ENCODE measurements at regions of chr9 and their contacts with region 1.

Region 1: DNA sequence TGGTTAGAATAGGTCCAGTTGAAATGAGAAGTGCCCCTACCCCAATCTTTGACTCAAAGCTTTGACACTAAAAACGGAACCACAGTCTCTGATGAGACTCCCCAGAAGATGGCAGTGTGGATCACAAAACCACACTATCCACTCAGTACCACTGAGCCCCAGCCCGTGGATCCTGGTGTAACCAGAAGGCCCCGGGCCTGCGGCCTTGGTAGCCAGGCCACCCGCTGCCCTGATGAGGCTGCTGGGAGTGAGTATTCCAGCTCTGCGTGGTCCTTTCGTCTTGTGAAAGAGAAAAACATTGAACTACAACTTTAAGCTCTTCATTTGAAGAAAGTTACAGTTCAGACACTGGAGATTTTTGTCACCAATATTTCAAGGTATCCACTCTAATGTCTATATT is 42.2 kb upstream of the FBP1 start:
- DNase-seq: no peak
- H3K4me3 ChIP-seq: no peak overlapping the region
- H3K27me3 ChIP-seq: no peaks in the 10 kb centered on the region
- CTCF ChIP-seq: peak; percentile 80

Region 2: GRCh38 chr9:94668418-94668932 is 13.0 kb before region 1 on chr9:
- CTCF ChIA-PET with region 1: interaction called, 16 read pairs
- POLR2A ChIA-PET with region 1: no interaction called
- DNase-seq: no peak
- H3K4me3 ChIP-seq: no peak overlapping the region
- H3K27me3 ChIP-seq: no peaks in the 10 kb centered on the region
- CTCF ChIP-seq: no peak

Region 3: GRCh38 chr9:94697972-94698581 is 16.6 kb after region 1 on chr9:
- CTCF ChIA-PET with region 1: interaction called, 20 read pairs
- POLR2A ChIA-PET with region 1: no interaction called
- DNase-seq: no peak
- H3K4me3 ChIP-seq: no peak overlapping the region
- H3K27me3 ChIP-seq: no peaks in the 10 kb centered on the region
- CTCF ChIP-seq: no peak

Region 4: DNA sequence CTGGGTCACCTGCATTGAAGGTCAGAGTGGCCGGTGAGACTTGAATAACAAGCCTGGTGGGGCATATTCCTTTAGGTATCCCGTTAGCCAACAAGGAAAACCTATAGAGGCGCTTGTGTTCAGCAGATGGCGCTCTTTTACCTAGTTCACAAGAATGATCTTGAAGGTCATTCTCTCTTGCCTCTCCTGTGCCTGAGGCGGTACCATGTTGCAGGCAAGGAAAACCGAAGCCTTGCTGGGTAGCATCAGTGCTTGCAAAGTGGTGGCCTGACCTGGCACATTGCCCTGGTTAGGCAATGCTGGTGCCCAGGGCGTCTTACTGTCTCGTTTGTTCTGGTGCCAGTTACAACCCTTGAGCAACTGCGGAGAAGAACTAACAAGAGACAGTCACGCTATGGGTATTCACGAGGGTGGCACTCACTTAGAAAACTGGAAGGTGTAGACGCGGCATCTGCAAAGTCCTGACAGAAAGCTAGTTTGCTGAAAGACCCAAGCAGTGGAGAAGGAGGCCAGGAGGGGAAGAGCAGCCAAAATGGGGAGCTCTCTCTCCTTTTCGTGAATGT is 101.7 kb after region 1 on chr9:
- CTCF ChIA-PET with region 1: interaction called, 14 read pairs
- POLR2A ChIA-PET with region 1: no interaction called
- DNase-seq: peak; percentile 58
- H3K4me3 ChIP-seq: no peak overlapping the region
- H3K27me3 ChIP-seq: no peaks in the 10 kb centered on the region
- CTCF ChIP-seq: peak; percentile 67

Region 5: DNA sequence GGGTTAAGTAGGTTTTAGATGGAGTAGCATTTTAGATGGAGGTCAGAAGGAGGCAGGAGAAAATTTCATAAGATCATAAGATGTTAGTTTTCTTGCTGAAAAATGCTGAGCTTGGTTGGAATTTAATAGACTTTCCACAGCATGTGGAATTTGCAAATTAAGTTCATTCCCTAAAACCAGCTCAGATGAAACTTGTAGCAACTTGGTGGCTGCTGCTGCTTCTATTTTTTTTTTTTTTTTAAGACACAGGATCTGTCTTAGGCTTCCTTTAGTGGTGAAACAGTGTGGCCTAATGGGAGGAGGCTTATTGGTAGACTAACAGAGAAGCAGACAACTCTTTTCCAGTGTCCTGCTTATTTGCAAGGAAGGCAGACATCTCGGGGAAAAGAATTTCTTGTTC is 199.5 kb after region 1 on chr9:
- CTCF ChIA-PET with region 1: interaction called, 12 read pairs
- POLR2A ChIA-PET with region 1: no interaction called
- DNase-seq: peak; percentile 54
- H3K4me3 ChIP-seq: no peak overlapping the region
- H3K27me3 ChIP-seq: no peaks in the 10 kb centered on the region
- CTCF ChIP-seq: no peak

Region 6: GRCh38 chr9:94928691-94929372 is 247.3 kb after region 1 on chr9:
- CTCF ChIA-PET with region 1: no interaction called
- POLR2A ChIA-PET with region 1: no interaction called
- DNase-seq: no peak
- H3K4me3 ChIP-seq: no peak overlapping the region
- H3K27me3 ChIP-seq: no peaks in the 10 kb centered on the region
- CTCF ChIP-seq: no peak

Region 7: DNA sequence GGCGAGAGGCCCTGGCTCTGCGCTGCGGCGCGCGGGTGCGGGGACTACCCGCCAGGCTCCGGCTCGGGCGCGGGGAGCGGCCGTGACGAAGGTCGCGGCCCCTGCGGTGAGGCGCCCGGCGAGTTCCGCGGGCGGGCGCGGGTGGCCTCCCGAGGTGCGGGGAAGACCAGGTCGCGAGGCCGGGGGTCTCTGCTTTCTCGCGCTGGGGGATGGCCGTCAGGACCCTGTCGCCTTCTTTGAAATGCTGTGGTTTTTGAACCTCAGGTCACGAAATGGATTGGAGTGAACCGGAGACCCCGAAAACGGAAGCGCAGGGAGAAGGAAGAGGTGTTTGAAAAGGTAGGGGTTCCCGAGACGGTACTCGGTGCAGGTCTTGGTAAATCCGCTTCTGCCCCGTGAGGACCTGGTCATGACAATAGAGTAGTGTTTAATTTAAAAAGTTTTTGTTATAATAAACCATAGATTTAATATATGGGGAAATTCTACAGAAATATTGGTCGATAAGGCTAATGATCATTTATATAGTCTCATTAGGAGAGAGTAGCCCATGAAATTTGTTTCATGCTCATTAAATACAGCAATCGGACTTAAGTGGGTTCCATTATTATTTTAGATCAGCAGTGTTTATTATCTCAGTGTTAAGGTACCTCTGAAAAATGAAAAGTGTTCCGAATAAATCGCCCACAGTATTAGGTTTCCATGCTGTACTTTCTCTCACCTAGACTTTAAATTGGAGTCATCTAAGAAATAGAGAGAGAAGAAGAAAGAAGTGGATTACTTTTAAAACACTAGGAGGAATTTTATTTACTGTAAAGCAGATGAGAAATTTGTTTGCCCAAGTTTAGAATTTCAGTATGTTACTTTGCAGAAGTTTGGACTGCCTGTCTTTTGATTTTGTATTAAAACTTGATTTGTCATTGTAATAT is 324.0 kb after region 1 on chr9:
- CTCF ChIA-PET with region 1: interaction called, 16 read pairs
- POLR2A ChIA-PET with region 1: no interaction called
- DNase-seq: no peak
- H3K4me3 ChIP-seq: peak overlapping the region; percentile 87
- H3K27me3 ChIP-seq: no peaks in the 10 kb centered on the region
- CTCF ChIP-seq: no peak

Region 8: GRCh38 chr9:95167998-95168397 is 486.5 kb after region 1 on chr9:
- CTCF ChIA-PET with region 1: interaction called, 16 read pairs
- POLR2A ChIA-PET with region 1: no interaction called
- DNase-seq: peak; percentile 50
- H3K4me3 ChIP-seq: no peak overlapping the region
- H3K27me3 ChIP-seq: no peaks in the 10 kb centered on the region
- CTCF ChIP-seq: peak; percentile 91

Measured in BJ (cell line).